Right ventricle myocardium inferior (tissue), 1 donor: ENCODE measurements at regions of chr15 and their contacts with region 1.

Region 1: GRCh38 chr15:86502301-86502700 is 422.6 kb downstream of the AGBL1 start:
- DNase-seq: no peak
- ATAC-seq: peak; percentile 69

Region 2: DNA sequence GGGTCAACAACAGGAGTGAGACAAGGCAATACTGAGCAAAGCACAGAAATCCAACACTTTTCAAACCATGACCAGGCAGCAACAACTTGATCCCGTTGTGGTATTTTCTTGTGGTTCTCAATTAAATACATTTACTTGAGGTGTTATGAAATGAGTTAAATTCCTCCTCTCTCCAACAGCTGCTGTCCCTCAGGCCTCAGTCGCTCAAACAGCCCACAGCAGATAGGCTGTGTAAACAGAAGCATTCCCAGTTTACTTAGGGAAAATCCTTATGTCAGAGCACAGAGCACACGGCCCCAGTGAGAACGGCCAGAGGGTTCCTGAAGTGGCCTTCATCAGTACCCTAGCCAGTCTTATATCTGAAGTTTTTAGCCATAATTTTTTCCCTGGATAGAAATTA is 62.7 kb before region 1 on chr15:
- intact Hi-C with region 1: loop called (anchors 2 kb)
- DNase-seq: no peak
- ATAC-seq: peak; percentile 44